ENCODE measurements at regions of chr12 and their contacts with region 1.

Region 1: GRCh38 chr12:127165567-127166392 is 1101.2 kb upstream of the TMEM132C start:
- DNase-seq: peak; percentile 51 to 90 (median 78)
- ATAC-seq: peak; percentile 82
- H3K4me3 ChIP-seq: peak overlapping the region; percentile 12 to 47
- H3K4me3 Mint-ChIP-seq: peak overlapping the region; percentile 79
- H3K27ac ChIP-seq: peak overlapping the region in 1 of 2 experiments; percentile 67
- H3K27ac Mint-ChIP-seq: peak overlapping the region; percentile 78
- H3K4me1 ChIP-seq: peaks cover 15% of the 10 kb centered on the region
- H3K4me1 Mint-ChIP-seq: peaks cover 19% of the 10 kb centered on the region
- H3K27me3 ChIP-seq: no peaks in the 10 kb centered on the region
- H3K27me3 Mint-ChIP-seq: peaks cover 14% of the 10 kb centered on the region
- CTCF ChIP-seq: no peak

Region 2: DNA sequence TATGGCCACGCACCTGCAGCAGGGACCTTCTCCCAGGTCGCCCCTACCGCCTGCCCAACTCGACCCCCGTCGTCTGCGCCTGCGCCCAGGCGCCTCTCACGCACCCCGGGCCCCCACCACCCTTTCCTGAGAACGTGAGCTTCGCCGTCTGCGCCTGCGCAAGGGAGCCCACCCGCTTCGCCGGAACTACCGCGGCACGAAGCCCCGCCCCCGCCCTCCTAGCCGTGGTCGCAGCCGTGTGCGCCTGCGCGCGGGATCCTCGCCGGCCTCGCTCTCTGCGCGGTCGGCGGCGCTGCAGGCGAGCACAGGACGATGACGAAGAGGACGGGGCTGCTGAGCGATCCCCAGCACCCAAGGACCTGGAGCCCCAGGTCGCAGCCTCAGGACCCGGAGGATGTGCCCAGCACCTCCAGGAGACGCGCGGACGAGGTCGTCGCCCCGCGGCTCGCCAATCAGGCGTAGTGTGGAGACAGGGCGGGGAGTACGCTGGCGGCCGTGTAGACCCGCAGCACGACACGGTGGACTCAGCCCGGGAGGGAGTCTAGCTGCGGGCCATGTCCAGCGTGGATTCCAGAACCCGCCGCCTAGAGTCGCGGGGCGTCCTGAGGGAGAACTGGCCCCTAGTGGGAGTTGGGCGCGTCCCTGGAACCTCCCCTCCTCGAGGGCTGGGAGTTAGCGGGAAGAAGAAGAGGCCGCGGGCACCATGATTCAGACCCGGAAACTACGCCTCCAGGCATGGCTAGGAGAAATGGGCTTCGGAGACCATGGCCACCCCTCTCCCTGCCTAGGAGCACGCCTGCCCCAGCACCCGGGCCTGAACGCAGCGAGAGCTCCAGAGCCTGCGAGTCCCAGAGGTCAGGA is 19.6 kb before region 1 on chr12:
- CTCF ChIA-PET with region 1: no interaction called
- POLR2A ChIA-PET with region 1: no interaction called
- intact Hi-C with region 1: loop called (anchors 1 to 2 kb)
- DNase-seq: peak; percentile 25 to 89 (median 69)
- ATAC-seq: peak; percentile 88
- H3K4me3 ChIP-seq: peak overlapping the region; percentile 16 to 67
- H3K4me3 Mint-ChIP-seq: peak overlapping the region; percentile 72
- H3K27ac ChIP-seq: peak overlapping the region in 1 of 2 experiments; percentile 9
- H3K27ac Mint-ChIP-seq: no peak overlapping the region
- H3K4me1 ChIP-seq: peaks cover 8% of the 10 kb centered on the region
- H3K4me1 Mint-ChIP-seq: peaks cover 7% of the 10 kb centered on the region
- H3K27me3 ChIP-seq: no peaks in the 10 kb centered on the region
- H3K27me3 Mint-ChIP-seq: peaks cover 2% of the 10 kb centered on the region
- CTCF ChIP-seq: no peak

Region 3: GRCh38 chr12:127327986-127328385 is 162.2 kb after region 1 on chr12:
- CTCF ChIA-PET with region 1: no interaction called
- POLR2A ChIA-PET with region 1: no interaction called
- intact Hi-C with region 1: no loop called
- DNase-seq: no peak
- ATAC-seq: no peak
- H3K4me3 ChIP-seq: no peak overlapping the region
- H3K4me3 Mint-ChIP-seq: no peak overlapping the region
- H3K27ac ChIP-seq: no peak overlapping the region
- H3K27ac Mint-ChIP-seq: no peak overlapping the region
- H3K4me1 ChIP-seq: no peaks in the 10 kb centered on the region
- H3K4me1 Mint-ChIP-seq: no peaks in the 10 kb centered on the region
- H3K27me3 ChIP-seq: no peaks in the 10 kb centered on the region
- H3K27me3 Mint-ChIP-seq: no peaks in the 10 kb centered on the region
- CTCF ChIP-seq: no peak

Region 4: DNA sequence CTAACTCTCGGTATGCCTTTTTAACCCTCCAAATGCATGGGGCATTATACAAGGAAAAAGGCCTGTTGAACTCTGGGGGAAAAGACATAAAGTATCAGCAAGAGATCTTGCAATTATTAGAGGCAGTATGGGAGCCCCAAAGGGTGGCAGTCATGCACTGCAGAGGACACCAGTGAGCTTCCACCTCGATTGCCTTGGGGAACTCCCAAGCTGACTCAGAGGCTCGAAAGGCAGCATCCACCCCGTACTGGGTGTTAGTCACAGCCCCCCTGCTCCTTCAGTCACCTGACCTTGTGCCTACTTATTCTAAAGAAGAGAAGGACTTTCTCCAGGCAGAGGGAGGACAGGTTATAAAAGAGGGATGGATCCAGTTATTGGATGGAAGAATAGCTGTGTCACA is 319.7 kb after region 1 on chr12:
- CTCF ChIA-PET with region 1: no interaction called
- POLR2A ChIA-PET with region 1: no interaction called
- intact Hi-C with region 1: no loop called
- DNase-seq: no peak
- ATAC-seq: no peak
- H3K4me3 ChIP-seq: no peak overlapping the region
- H3K4me3 Mint-ChIP-seq: no peak overlapping the region
- H3K27ac ChIP-seq: no peak overlapping the region
- H3K27ac Mint-ChIP-seq: no peak overlapping the region
- H3K4me1 ChIP-seq: no peaks in the 10 kb centered on the region
- H3K4me1 Mint-ChIP-seq: no peaks in the 10 kb centered on the region
- H3K27me3 ChIP-seq: no peaks in the 10 kb centered on the region
- H3K27me3 Mint-ChIP-seq: no peaks in the 10 kb centered on the region
- CTCF ChIP-seq: no peak

Region 5: GRCh38 chr12:127696963-127697362 is 531.2 kb after region 1 on chr12:
- CTCF ChIA-PET with region 1: no interaction called
- POLR2A ChIA-PET with region 1: no interaction called
- intact Hi-C with region 1: no loop called
- DNase-seq: no peak
- ATAC-seq: no peak
- H3K4me3 ChIP-seq: no peak overlapping the region
- H3K4me3 Mint-ChIP-seq: no peak overlapping the region
- H3K27ac ChIP-seq: no peak overlapping the region
- H3K27ac Mint-ChIP-seq: no peak overlapping the region
- H3K4me1 ChIP-seq: no peaks in the 10 kb centered on the region
- H3K4me1 Mint-ChIP-seq: no peaks in the 10 kb centered on the region
- H3K27me3 ChIP-seq: no peaks in the 10 kb centered on the region
- H3K27me3 Mint-ChIP-seq: no peaks in the 10 kb centered on the region
- CTCF ChIP-seq: no peak

Region 6: DNA sequence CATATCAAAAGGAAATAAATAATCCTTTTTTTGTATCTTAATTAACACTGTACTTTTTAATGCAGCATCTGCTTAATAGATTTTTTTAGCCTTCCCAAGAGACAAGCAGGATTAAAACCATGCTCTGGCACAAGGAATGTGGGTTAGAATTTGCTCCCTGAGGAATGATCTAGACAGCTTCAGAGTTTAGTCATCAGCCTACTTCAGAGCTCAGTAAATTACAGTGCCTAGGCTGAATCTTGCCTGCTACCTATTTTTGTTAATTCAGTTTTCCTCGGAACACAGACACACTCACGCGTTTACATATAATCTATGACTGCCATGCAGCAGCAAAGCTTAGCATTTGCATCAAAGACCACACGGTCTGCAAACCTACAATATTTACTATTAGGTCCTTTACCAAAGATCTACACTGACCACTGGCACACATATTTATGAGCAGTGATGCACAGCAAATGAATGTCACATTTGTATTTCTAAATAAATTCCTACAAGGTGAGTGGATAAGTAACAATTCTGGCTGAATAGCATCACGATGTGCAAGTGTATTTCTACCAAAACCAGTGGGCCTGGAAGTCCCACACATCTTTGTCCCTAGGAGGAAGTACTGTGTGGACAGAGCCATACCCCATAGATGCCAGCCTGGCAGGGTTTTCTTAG is 791.4 kb after region 1 on chr12:
- CTCF ChIA-PET with region 1: no interaction called
- POLR2A ChIA-PET with region 1: no interaction called
- intact Hi-C with region 1: no loop called
- DNase-seq: no peak
- ATAC-seq: no peak
- H3K4me3 ChIP-seq: no peak overlapping the region
- H3K4me3 Mint-ChIP-seq: no peak overlapping the region
- H3K27ac ChIP-seq: no peak overlapping the region
- H3K27ac Mint-ChIP-seq: no peak overlapping the region
- H3K4me1 ChIP-seq: no peaks in the 10 kb centered on the region
- H3K4me1 Mint-ChIP-seq: no peaks in the 10 kb centered on the region
- H3K27me3 ChIP-seq: no peaks in the 10 kb centered on the region
- H3K27me3 Mint-ChIP-seq: no peaks in the 10 kb centered on the region
- CTCF ChIP-seq: no peak

Measured in CD8-positive, alpha-beta T cell (primary cell).